Activated CD4-positive, alpha-beta T cell treated with anti-CD3 and anti-CD28 coated beads, Interleukin-2, amount 10 ng/mL, durations not matched to agents 24 days and 14 days (primary cell): ENCODE measurements at regions of chr9 and their contacts with region 1.

Region 1: GRCh38 chr9:6584881-6585597 is 60.5 kb downstream of the GLDC start:
- DNase-seq: no peak
- H3K4me3 Mint-ChIP-seq: no peak overlapping the region
- H3K27ac Mint-ChIP-seq: no peak overlapping the region
- H3K4me1 Mint-ChIP-seq: no peaks in the 10 kb centered on the region
- H3K27me3 Mint-ChIP-seq: peaks cover 2% of the 10 kb centered on the region

Region 2: DNA sequence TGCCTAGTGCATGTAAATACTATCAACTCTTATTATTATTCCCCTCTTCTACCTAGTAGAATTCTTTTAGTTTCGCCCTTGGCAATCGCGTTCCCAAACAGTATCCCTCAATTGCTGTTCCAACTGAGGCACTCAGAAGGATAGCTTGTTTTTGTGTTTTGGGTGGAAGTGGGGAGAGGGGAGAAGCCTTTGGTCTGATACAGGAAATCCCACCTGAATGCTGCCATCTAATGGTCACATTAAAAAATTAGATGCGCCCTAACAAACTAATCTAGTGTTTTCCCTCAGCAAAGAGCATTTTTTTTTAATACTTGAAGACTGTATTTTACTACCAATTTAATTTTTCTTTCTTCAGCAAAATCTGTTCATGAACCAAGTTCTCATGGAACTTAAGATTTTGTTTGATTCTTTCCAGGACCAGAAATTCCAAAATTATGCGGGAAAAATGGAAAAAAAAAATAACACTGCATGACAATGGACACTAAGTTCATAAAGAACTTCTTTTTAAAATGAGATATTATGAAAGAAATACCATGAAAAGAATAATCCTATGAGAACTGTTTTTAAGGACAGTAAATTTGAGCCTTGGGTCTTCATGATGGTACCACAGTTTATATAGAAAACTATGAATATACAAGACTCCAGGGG is 82.7 kb after region 1 on chr9:
- intact Hi-C with region 1: loop called (anchors 1 kb)
- DNase-seq: no peak
- H3K4me3 Mint-ChIP-seq: no peak overlapping the region
- H3K27ac Mint-ChIP-seq: no peak overlapping the region
- H3K4me1 Mint-ChIP-seq: no peaks in the 10 kb centered on the region
- H3K27me3 Mint-ChIP-seq: peaks cover 2% of the 10 kb centered on the region

Region 3: DNA sequence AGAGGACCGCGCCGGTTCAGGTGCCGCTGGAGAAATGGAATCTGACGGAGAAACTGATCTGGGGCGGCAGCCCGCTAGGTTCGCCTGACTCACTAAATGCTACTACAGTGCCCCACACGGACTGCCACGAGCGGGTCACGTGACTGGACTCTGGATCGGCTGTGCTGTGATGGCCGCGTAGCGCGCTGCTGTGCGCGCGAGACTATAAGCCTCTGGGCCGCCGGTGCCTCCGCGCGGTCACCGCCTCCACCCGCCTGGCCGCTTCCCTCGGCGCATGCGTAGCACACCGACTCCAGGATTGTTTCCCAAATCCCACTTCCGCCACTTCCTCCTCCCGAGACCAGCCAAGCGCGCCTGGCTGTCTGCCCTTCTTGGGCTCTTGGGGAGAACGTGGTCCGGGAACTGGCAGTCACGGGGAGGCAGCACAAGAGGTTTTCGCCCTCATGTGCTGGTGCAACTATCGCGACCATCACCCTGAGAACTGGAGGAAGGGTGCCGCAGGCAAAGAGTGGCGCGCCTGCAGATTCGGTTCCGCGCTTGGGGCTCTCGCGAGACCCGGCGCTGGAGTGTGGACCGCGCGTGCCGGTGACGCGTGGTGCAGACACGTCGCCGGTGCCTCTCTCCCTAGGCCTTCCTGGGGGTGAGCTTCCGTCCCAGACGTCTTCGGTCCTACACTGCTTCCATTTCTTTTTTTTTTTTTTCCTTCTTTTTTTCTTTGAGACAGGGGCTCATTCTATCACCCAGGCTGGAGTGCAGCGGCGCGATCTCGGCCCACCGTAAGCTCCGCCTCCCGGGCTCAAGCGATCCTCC is 96.3 kb after region 1 on chr9:
- intact Hi-C with region 1: no loop called
- DNase-seq: peak; percentile 96
- H3K4me3 Mint-ChIP-seq: peak overlapping the region; percentile 97
- H3K27ac Mint-ChIP-seq: peak overlapping the region; percentile 99
- H3K4me1 Mint-ChIP-seq: peaks cover 13% of the 10 kb centered on the region
- H3K27me3 Mint-ChIP-seq: no peaks in the 10 kb centered on the region